Activated T-helper 2 cell treated with anti-CD3 and anti-CD28 coated beads, Interferon-gamma antibody, Interleukin-2, Interleukin-4, amounts not matched to agents 10 μg/mL and 5 μg/mL and 100 μg/mL, durations not matched to agents 14 hours and 24 hours and 36 hours (primary cell): ENCODE measurements at regions of chr20 and their contacts with region 1.

Region 1: GRCh38 chr20:44080646-44081267 is 106.2 kb downstream of the JPH2 start:
- DNase-seq: peak; percentile 58
- H3K4me3 Mint-ChIP-seq: no peak overlapping the region
- H3K27ac Mint-ChIP-seq: no peak overlapping the region
- H3K4me1 Mint-ChIP-seq: peaks cover 23% of the 10 kb centered on the region
- H3K27me3 Mint-ChIP-seq: peaks cover 7% of the 10 kb centered on the region

Region 2: GRCh38 chr20:43710370-43711044 is 370.2 kb before region 1 on chr20:
- intact Hi-C with region 1: no loop called
- DNase-seq: no peak
- H3K4me3 Mint-ChIP-seq: no peak overlapping the region
- H3K27ac Mint-ChIP-seq: no peak overlapping the region
- H3K4me1 Mint-ChIP-seq: no peaks in the 10 kb centered on the region
- H3K27me3 Mint-ChIP-seq: no peaks in the 10 kb centered on the region

Region 3: GRCh38 chr20:44056010-44056698 is 24.6 kb before region 1 on chr20:
- intact Hi-C with region 1: loop called (anchors 1 kb)
- DNase-seq: peak; percentile 10
- H3K4me3 Mint-ChIP-seq: no peak overlapping the region
- H3K27ac Mint-ChIP-seq: no peak overlapping the region
- H3K4me1 Mint-ChIP-seq: peaks cover 5% of the 10 kb centered on the region
- H3K27me3 Mint-ChIP-seq: peaks cover 28% of the 10 kb centered on the region